ENCODE measurements at regions of chr3 and their contacts with region 1.

Region 1: GRCh38 chr3:128426128-128426921 is 40.4 kb downstream of the DNAJB8 start:
- DNase-seq: peak; percentile 78
- H3K27ac ChIP-seq: no peak overlapping the region
- CTCF ChIP-seq: peak; percentile 98

Region 2: GRCh38 chr3:128217702-128218547 is 208.4 kb before region 1 on chr3:
- CTCF ChIA-PET with region 1: no interaction called
- POLR2A ChIA-PET with region 1: no interaction called
- DNase-seq: no peak
- H3K27ac ChIP-seq: peak overlapping the region; percentile 39; the same call in 1 of the 2 replicates
- CTCF ChIP-seq: no peak

Region 3: DNA sequence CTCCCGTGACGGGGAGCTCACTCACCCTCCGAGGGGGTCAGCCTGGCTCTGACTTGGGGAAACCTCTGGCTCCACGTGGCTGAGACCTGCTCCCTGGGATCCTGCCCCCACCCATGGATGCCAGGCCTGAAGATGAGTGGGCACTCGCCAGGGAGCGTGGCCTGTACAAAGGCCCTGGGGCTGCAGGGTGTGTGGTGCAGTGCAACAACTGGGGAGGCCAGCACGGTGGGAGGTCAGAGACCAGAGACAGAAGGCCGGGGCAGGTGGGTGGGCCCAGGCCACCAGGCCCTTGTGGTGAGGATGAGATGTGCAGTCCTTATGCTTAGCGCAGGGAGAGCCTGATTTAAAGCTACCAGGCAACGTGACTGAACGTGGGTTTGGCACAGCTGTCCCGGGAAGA is 35.4 kb after region 1 on chr3:
- CTCF ChIA-PET with region 1: no interaction called
- POLR2A ChIA-PET with region 1: interaction called, 12 read pairs
- DNase-seq: no peak
- H3K27ac ChIP-seq: no peak overlapping the region
- CTCF ChIP-seq: no peak

Region 4: GRCh38 chr3:128489855-128490649 is 63.7 kb after region 1 on chr3:
- CTCF ChIA-PET with region 1: interaction called, 12 read pairs
- POLR2A ChIA-PET with region 1: no interaction called
- DNase-seq: no peak
- H3K27ac ChIP-seq: peak overlapping the region; percentile 62
- CTCF ChIP-seq: peak; percentile 14; the same call in 1 of the 2 replicates

Region 5: DNA sequence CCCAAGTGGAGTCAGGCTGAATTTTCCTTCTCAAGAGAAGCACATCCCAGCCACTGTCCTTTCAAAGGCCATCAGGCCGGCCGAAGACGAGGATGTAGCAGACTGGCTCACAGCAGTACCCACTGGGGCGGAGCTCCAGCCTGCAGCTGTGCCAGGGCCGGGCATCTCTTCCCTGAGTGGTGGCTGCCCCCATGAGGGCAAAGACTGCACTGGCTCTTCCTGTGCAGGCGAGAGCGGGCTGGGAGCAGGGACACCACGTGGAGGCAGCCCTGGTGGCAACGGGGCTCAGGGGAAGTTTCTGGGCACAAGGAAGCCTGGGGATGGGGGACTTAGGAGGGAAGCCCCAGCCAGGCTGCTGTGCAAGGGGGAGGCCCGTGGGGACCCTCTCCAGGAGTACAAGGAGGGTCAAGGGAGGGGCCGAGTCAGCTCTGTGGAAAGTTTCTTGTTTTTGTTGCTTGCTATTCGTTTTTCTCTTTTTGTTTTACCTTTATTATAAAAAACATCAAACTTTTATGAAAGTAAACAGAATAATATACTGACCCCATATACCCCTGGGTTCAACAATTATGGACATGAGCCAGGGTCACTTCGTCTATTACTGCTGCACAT is 158.2 kb after region 1 on chr3:
- CTCF ChIA-PET with region 1: interaction called, 15 read pairs
- POLR2A ChIA-PET with region 1: interaction called, 3 read pairs
- DNase-seq: peak; percentile 84
- H3K27ac ChIP-seq: no peak overlapping the region
- CTCF ChIP-seq: peak; percentile 74

Measured in RWPE1 (cell line).